Sciatic nerve (tissue), 2 donors: ENCODE measurements at regions of chr13 and their contacts with region 1.

Region 1: GRCh38 chr13:59547950-59548349 is 615.8 kb downstream of the DIAPH3 start:
- DNase-seq: no peak
- ATAC-seq: no peak

Region 2: DNA sequence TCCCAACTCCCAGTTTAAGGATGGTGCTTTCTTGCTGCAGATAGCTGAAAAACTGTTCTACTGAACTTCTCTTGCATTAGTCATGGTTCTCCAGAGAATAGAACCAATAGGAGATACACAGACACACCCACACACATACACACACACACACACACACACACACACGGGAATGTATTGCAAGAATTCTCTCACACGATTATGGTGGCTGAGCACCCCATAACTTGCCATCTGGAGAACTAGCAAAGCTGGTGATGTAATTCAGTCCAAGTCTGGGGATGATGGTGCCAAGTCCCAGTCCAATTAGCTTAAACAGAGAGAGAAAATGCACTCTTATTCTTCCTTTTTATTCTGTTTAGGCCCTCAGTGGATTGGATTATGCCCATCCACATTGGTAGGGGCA is 28.1 kb before region 1 on chr13:
- intact Hi-C with region 1: no loop called
- DNase-seq: no peak
- ATAC-seq: no peak

Region 3: GRCh38 chr13:59584761-59585670 is 37.1 kb after region 1 on chr13:
- intact Hi-C with region 1: loop called (anchors 1 kb)
- DNase-seq: no peak
- ATAC-seq: no peak